AG04449 (cell line): ENCODE measurements at regions of chr6 and their contacts with region 1.

Region 1: GRCh38 chr6:24743265-24743943 is 24.4 kb upstream of the C6orf62 start:
- DNase-seq: peak; percentile 90
- H3K4me3 ChIP-seq: peak overlapping the region; percentile 40
- CTCF ChIP-seq: no peak

Region 2: GRCh38 chr6:24720604-24721460 is 22.6 kb before region 1 on chr6:
- CTCF ChIA-PET with region 1: interaction called, 5 read pairs
- POLR2A ChIA-PET with region 1: interaction called, 13 read pairs
- DNase-seq: peak; percentile 99
- H3K4me3 ChIP-seq: peak overlapping the region; percentile 91
- CTCF ChIP-seq: no peak